Heart left ventricle (tissue), 16 donors: ENCODE measurements at regions of chr17 and their contacts with region 1.

Region 1: GRCh38 chr17:28812091-28812747 is 30.4 kb downstream of the FAM222B start:
- DNase-seq: peak; percentile 98 to 99 (median 99)
- ATAC-seq: peak; percentile 100
- H3K4me3 ChIP-seq: peak overlapping the region; percentile 63 to 99 (median 90)
- H3K27ac ChIP-seq: peak overlapping the region; percentile 42 to 92 (median 87)
- H3K4me1 ChIP-seq: peaks cover 0 to 42% (median 22%) of the 10 kb centered on the region in 12 donors
- H3K27me3 ChIP-seq: no peaks in the 10 kb centered on the region
- CTCF ChIP-seq: no peak
- POLR2A ChIP-seq: peak in 1 of 2 donors; percentile 47

Region 2: GRCh38 chr17:28873839-28874238 is 61.6 kb after region 1 on chr17:
- intact Hi-C with region 1: loop called in 1 of 10 experiments (anchors 2 kb)
- DNase-seq: no peak
- ATAC-seq: no peak
- H3K4me3 ChIP-seq: no peak overlapping the region
- H3K27ac ChIP-seq: no peak overlapping the region
- H3K4me1 ChIP-seq: no peaks in the 10 kb centered on the region
- H3K27me3 ChIP-seq: no peaks in the 10 kb centered on the region
- CTCF ChIP-seq: no peak
- POLR2A ChIP-seq: no peak